A673 (cell line): ENCODE measurements at regions of chr17 and their contacts with region 1.

Region 1: GRCh38 chr17:33292184-33292980 is 713 bp downstream of the ASIC2 start:
- DNase-seq: peak; percentile 69
- H3K4me3 ChIP-seq: peak overlapping the region; percentile 74
- H3K27ac ChIP-seq: peak overlapping the region; percentile 88
- H3K4me1 ChIP-seq: peaks cover 30% of the 10 kb centered on the region
- H3K27me3 ChIP-seq: no peaks in the 10 kb centered on the region
- CTCF ChIP-seq: peak; percentile 54

Region 2: DNA sequence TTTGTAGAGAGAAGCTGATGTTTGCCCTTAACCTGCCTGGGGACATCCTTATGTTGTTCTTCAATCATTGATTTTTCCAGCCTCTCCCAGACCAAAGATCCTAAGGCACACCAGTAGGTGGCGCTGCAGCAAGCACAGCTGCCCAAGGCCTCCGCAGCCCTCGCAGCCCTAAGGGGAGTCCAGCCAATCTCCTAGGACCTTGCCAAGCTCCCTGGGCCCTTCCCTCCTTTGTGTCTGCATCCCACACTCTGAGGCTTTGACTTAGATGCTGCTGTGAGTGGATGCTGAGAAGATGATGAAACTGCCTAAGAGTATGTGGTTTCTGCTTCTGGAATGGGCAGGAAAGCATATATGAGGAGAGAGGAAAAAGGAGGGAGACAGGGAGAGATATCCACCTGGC is 253.6 kb before region 1 on chr17:
- CTCF ChIA-PET with region 1: no interaction called
- POLR2A ChIA-PET with region 1: no interaction called
- intact Hi-C with region 1: loop called (anchors 10 kb)
- DNase-seq: peak; percentile 66
- H3K4me3 ChIP-seq: no peak overlapping the region
- H3K27ac ChIP-seq: no peak overlapping the region
- H3K4me1 ChIP-seq: peaks cover 19% of the 10 kb centered on the region
- H3K27me3 ChIP-seq: no peaks in the 10 kb centered on the region
- CTCF ChIP-seq: peak; percentile 79

Region 3: DNA sequence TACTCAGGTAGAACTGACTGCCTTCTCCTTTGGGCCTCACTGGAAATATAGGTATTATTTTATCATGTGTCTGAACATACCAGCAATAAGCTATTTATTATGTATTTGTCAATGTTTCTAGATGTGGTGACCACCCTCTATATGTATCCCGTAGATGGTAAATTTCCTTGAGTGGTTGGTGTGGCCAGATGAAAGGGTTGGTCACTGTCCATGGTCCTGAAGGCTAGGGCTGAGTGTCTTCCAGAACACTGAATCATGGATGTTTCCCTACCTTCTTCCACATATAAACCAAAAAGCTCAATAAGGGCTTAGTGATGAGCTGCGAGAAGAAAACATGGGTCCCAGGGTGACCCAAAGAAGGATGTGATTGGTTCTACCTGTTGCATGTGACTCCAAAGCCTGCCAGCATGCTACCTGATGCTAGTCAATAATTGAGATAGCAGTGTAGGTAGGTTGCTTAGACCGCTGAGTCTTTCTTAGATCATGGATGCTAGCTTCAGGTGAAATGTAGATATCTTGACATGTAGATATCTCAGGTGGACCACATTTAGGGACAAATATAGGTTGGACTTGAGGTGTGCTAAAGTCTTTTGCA is 149.6 kb before region 1 on chr17:
- CTCF ChIA-PET with region 1: no interaction called
- POLR2A ChIA-PET with region 1: no interaction called
- intact Hi-C with region 1: loop called (anchors 5 kb)
- DNase-seq: peak; percentile 31
- H3K4me3 ChIP-seq: no peak overlapping the region
- H3K27ac ChIP-seq: no peak overlapping the region
- H3K4me1 ChIP-seq: peaks cover 33% of the 10 kb centered on the region
- H3K27me3 ChIP-seq: no peaks in the 10 kb centered on the region
- CTCF ChIP-seq: no peak